ENCODE measurements at regions of chr22 and their contacts with region 1.

Region 1: GRCh38 chr22:45424231-45424731 is 10.8 kb downstream of the RIBC2 start:
- DNase-seq: no peak
- H3K4me3 ChIP-seq: no peak overlapping the region
- H3K27ac ChIP-seq: no peak overlapping the region
- H3K4me1 ChIP-seq: no peaks in the 10 kb centered on the region
- H3K27me3 ChIP-seq: no peaks in the 10 kb centered on the region

Region 2: DNA sequence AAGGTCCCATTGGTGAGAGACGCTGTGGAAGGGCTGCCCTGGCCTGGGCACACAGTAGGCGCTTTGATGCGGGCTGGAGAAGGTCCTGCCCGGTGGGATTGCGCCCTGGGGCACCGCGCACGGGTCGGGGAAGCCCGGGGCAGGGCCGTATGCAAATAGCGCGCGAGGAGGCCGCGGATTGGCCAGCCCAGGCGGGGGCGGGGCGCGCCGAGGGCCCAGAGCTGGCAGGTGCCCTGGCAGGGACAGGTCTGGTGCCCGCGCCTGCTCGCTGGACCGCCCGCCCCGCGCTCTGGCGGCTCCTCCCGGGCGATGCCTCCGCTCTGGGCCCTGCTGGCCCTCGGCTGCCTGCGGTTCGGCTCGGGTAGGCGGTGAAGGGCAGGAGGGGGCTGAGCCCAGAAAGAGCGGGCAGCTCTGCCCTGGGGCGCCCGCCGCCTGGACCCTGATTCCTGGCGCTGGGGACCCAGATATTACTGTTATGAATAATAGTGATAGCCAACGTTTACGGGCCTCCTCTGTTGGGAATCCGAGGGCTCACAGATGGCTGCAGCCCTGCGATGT is 139.5 kb before region 1 on chr22 and contains the start of gene UPK3A:
- in situ Hi-C with region 1: loop called (anchors 10 kb)
- DNase-seq: peak; percentile 28
- H3K4me3 ChIP-seq: no peak within 1 kb of the TSS
- H3K27ac ChIP-seq: no peak within 1 kb of the TSS
- H3K4me1 ChIP-seq: peaks cover 5% of the 10 kb centered on the region
- H3K27me3 ChIP-seq: peaks cover 39% of the 10 kb centered on the region
- total RNA-seq, gene UPK3A: not detected in 2 replicates

Measured in GM23248 (cell line).